Activated CD4-positive, alpha-beta T cell treated with anti-CD3 and anti-CD28 coated beads for 36 hours (primary cell): ENCODE measurements at regions of chr1 and their contacts with region 1.

Region 1: GRCh38 chr1:28581536-28582247 is 10.4 kb upstream of the RAB42 start:
- DNase-seq: peak; percentile 97
- ATAC-seq: peak; percentile 91
- H3K4me3 Mint-ChIP-seq: peak overlapping the region; percentile 89
- H3K27ac Mint-ChIP-seq: peak overlapping the region; percentile 95
- H3K4me1 Mint-ChIP-seq: peaks cover 33% of the 10 kb centered on the region
- H3K27me3 Mint-ChIP-seq: no peaks in the 10 kb centered on the region

Region 2: DNA sequence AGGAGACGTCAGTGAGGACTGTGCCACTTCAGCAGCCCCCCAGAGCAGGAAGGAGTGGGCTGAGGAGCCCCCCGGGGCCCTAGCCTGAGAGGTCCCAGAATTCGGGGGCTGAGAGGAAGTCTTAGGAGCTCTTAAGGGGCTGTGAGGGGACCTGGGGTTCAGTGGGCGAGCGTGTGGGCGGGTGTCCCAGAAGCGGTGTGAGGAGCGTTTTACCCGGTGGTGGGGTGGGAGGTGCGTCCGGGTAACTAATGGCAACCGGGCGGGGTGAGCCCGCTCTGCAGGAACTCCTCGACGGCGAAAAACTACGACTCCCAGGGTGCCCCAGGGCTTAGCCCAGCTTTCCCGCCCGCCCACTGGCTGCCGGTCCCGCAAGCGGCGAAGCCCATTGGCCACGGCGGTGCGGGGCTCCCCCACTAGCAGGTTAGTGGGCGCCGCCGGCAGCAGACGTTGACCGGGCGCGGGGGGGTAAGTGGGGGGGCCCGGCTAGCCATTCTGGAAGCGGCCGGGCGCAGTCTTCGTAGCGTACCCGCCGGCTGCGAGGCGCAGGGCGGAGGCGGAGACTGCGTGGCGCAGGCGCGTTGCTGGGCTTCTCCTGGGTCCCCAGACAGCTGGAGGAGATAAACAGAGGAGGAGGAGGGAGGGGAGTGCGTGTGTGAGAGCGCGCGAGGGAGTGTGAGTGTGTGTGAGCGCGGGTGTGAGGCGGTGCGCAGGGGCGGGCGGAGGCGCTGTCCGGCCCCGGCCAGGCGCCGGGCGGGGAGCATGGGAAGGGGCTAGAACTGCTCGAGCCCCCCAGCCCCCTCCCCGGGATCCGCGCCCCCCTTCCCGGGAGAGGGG is 1347.4 kb before region 1 on chr1 and contains the start of gene WDTC1:
- CTCF ChIA-PET with region 1: no interaction called
- POLR2A ChIA-PET with region 1: no interaction called
- intact Hi-C with region 1: loop called in 1 of 2 experiments (anchors 5 kb)
- DNase-seq: peak; percentile 99
- ATAC-seq: peak; percentile 95
- H3K4me3 Mint-ChIP-seq: peak within 1 kb of the TSS; percentile 95
- H3K27ac Mint-ChIP-seq: peak within 1 kb of the TSS; percentile 93
- H3K4me1 Mint-ChIP-seq: peaks cover 27% of the 10 kb centered on the region
- H3K27me3 Mint-ChIP-seq: no peaks in the 10 kb centered on the region
- total RNA-seq, gene WDTC1: 19.3 to 21.9 TPM

Region 3: GRCh38 chr1:28259307-28260167 is 322.2 kb before region 1 on chr1 and contains the start of gene SESN2:
- CTCF ChIA-PET with region 1: no interaction called
- POLR2A ChIA-PET with region 1: interaction called, 3 read pairs
- intact Hi-C with region 1: loop called in 1 of 2 experiments (anchors 1 kb)
- DNase-seq: peak; percentile 100
- ATAC-seq: peak; percentile 93
- H3K4me3 Mint-ChIP-seq: peak within 1 kb of the TSS; percentile 81
- H3K27ac Mint-ChIP-seq: peak within 1 kb of the TSS; percentile 99
- H3K4me1 Mint-ChIP-seq: peaks cover 42% of the 10 kb centered on the region
- H3K27me3 Mint-ChIP-seq: no peaks in the 10 kb centered on the region
- total RNA-seq, gene SESN2: 32.9 to 33.3 TPM

Region 4: GRCh38 chr1:28505406-28506187 is 76.1 kb before region 1 on chr1 and contains the start of gene RCC1:
- CTCF ChIA-PET with region 1: interaction called, 3 read pairs
- POLR2A ChIA-PET with region 1: interaction called, 86 read pairs
- intact Hi-C with region 1: loop called (anchors 1 to 2 kb)
- DNase-seq: peak; percentile 97
- ATAC-seq: peak; percentile 85
- H3K4me3 Mint-ChIP-seq: peak within 1 kb of the TSS; percentile 98
- H3K27ac Mint-ChIP-seq: peak within 1 kb of the TSS; percentile 99
- H3K4me1 Mint-ChIP-seq: peaks cover 26% of the 10 kb centered on the region
- H3K27me3 Mint-ChIP-seq: peaks cover 1% of the 10 kb centered on the region
- total RNA-seq, gene RCC1: 103 to 107 TPM

Region 5: DNA sequence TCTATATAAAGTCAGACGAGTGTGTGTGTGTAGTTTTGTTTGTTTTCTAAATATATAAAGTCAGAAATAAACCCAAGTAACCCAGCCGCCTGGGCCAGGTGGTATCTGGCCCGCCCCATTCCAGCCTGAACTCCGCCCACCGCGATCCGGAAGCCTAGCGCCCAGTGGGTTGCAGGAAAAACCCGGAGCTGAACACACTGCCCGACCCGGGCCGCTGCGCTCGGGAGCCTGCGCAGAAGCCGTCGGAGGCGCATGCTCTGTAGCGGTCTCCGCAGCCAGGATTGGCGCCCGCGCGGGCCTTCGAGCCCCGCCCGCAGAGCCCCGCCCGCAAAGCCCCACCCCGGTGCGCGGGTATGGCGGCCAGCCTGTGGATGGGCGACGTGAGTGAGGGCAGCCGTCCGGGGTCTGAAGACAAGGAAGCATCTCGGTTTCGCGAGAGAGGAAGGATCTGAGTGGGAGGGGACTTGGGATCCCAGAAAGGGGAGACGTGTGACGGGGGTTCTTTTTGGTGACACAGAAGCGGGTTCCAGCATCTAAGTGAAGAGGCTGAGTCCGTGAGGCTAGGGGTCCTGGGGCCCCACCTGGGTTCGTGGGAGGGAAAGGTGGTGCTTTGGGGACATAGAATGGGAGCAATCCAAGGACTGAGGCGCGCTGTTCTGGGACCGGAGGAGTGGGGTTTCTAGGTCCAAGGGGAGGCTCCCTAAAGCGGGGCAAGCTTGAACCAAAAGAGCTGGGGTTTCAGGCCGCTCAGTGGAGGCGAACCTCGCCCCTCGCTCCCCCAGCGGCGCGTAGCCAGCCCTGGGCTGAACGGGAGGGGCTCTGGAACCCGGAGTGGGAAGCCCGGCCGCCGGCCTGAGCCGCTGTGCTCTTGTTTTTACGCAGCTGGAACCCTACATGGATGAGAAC is 28.7 kb before region 1 on chr1 and contains the start of gene TRNAU1AP:
- CTCF ChIA-PET with region 1: interaction called, 5 read pairs
- POLR2A ChIA-PET with region 1: interaction called, 75 read pairs
- intact Hi-C with region 1: loop called (anchors 1 kb)
- DNase-seq: peak; percentile 99
- ATAC-seq: peak; percentile 94
- H3K4me3 Mint-ChIP-seq: peak within 1 kb of the TSS; percentile 92
- H3K27ac Mint-ChIP-seq: peak within 1 kb of the TSS; percentile 95
- H3K4me1 Mint-ChIP-seq: peaks cover 24% of the 10 kb centered on the region
- H3K27me3 Mint-ChIP-seq: no peaks in the 10 kb centered on the region
- total RNA-seq, gene TRNAU1AP: 50.7 to 60.2 TPM

Region 6: DNA sequence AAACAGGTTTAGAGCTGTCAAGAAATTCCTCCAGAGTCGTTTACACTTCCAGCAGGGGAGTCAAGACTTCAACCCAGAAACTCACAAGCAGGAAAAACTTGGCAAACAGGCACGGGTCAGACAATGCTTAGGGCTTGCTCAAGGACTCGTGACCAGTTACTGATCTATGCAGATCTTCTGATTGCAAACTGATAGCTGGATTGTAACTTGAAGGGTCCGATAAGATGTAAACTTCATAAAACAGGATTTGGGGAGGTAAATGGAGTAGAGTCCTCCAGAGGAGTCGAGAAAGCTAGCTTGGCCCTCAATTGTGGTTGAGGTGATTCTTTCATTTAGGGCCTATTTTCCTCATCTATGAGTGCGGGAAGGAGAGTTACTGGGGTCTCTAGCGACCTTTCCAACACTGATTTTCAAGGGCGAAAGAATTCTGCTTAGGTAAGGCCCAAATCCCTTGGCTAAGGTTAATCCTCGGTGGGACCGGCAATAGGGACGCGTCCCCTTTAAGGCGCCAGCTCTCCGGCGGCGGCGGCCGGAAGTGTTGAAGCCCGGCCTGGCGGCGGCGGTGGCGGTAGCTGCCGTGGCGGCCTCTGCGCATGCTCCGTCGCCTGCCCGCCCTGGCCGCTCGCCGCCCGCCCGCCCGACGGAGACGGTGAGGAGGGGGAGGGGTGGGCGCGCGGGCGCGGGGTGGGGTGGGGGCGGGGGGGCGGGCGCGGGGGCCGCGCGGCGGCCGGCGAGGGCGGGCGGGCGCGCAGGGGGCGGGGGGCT is 86.7 kb after region 1 on chr1 and contains the start of gene GMEB1:
- CTCF ChIA-PET with region 1: no interaction called
- POLR2A ChIA-PET with region 1: interaction called, 22 read pairs
- intact Hi-C with region 1: loop called in 1 of 2 experiments (anchors 1 kb)
- DNase-seq: peak; percentile 93
- ATAC-seq: peak; percentile 72
- H3K4me3 Mint-ChIP-seq: peak within 1 kb of the TSS; percentile 84
- H3K27ac Mint-ChIP-seq: peak within 1 kb of the TSS; percentile 99
- H3K4me1 Mint-ChIP-seq: peaks cover 11% of the 10 kb centered on the region
- H3K27me3 Mint-ChIP-seq: no peaks in the 10 kb centered on the region
- total RNA-seq, gene GMEB1: 20.3 to 25.4 TPM

Region 7: DNA sequence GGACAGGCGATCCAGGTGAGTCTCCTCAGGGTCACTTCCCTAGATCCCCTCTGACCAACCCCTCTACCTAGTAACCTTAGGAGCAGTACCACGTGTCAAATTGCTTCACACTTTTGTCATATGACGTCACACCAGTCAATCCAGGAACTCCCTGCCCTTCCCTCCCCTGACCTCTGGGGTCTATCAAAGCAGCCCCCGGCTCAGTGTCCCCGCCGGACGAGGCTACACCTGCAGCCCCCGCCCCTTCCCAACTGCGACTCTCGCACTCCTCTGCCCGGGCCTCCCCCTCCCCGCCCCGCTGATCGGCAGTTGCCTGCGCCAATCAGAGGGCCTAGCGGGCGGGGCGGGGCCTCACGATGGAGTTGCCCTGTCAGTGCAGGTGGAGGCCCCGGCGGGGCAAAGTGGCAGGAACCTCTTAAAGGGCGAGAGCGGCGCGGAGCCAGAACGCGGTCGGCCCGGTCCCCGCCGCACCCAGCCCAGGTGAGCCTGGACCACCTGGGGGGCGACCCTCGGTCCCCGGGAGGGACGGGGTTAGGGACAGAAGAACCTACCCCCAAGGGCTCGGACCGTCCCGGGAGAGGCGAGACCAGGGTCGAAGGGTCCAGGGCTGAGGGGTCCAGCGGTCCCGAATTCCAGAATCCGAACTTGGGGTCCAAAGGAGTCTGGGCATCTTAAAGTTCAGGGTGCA is 305.2 kb after region 1 on chr1:
- CTCF ChIA-PET with region 1: no interaction called
- POLR2A ChIA-PET with region 1: interaction called, 3 read pairs
- intact Hi-C with region 1: loop called in 1 of 2 experiments (anchors 2 kb)
- DNase-seq: peak; percentile 95
- ATAC-seq: peak; percentile 77
- H3K4me3 Mint-ChIP-seq: peak overlapping the region; percentile 90
- H3K27ac Mint-ChIP-seq: peak overlapping the region; percentile 88
- H3K4me1 Mint-ChIP-seq: peaks cover 43% of the 10 kb centered on the region
- H3K27me3 Mint-ChIP-seq: no peaks in the 10 kb centered on the region